Activated CD4-positive, alpha-beta T cell treated with anti-CD3 and anti-CD28 coated beads for 36 hours (primary cell): ENCODE measurements at regions of chr4 and their contacts with region 1.

Region 1: GRCh38 chr4:88523325-88524129 is at the start of gene PYURF:
- DNase-seq: peak; percentile 88
- ATAC-seq: peak; percentile 87
- H3K4me3 Mint-ChIP-seq: peak within 1 kb of the TSS; percentile 92
- H3K27ac Mint-ChIP-seq: peak within 1 kb of the TSS; percentile 88
- H3K4me1 Mint-ChIP-seq: peaks cover 45% of the 10 kb centered on the region
- H3K27me3 Mint-ChIP-seq: no peaks in the 10 kb centered on the region
- total RNA-seq, gene PYURF: 27.3 to 44.1 TPM

Region 2: GRCh38 chr4:88533937-88534750 is 10.6 kb after region 1 on chr4:
- CTCF ChIA-PET with region 1: interaction called, 11 read pairs
- POLR2A ChIA-PET with region 1: no interaction called
- intact Hi-C with region 1: no loop called
- DNase-seq: no peak
- ATAC-seq: no peak
- H3K4me3 Mint-ChIP-seq: no peak overlapping the region
- H3K27ac Mint-ChIP-seq: no peak overlapping the region
- H3K4me1 Mint-ChIP-seq: peaks cover 23% of the 10 kb centered on the region
- H3K27me3 Mint-ChIP-seq: no peaks in the 10 kb centered on the region

Region 3: DNA sequence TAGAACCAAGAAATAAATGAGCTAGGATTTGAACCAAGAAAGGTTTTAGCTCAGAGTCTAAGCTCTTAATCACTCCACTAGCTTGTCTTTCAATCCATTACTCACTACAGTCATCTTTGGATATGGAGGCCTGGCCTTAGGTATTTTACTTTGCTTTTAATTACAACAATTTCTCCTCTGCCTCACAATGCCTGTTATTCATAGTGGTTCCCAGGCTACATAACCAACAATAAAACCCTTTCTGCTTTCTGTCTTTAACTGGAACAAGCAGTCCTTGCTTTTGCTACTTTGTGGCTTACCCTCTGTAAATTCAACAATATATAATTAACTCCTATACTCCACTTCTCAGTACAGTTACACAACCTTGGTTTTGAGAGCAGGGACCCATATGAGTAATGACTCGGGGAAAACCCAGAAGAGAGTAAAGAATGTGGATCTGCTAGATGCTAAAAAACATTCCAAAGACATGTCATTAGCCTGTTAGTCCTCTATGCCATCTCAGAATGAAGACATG is 268.8 kb after region 1 on chr4:
- CTCF ChIA-PET with region 1: no interaction called
- POLR2A ChIA-PET with region 1: no interaction called
- intact Hi-C with region 1: loop called in 1 of 2 experiments (anchors 5 kb)
- DNase-seq: no peak
- ATAC-seq: peak; percentile 88
- H3K4me3 Mint-ChIP-seq: no peak overlapping the region
- H3K27ac Mint-ChIP-seq: no peak overlapping the region
- H3K4me1 Mint-ChIP-seq: peaks cover 18% of the 10 kb centered on the region
- H3K27me3 Mint-ChIP-seq: no peaks in the 10 kb centered on the region

Region 4: DNA sequence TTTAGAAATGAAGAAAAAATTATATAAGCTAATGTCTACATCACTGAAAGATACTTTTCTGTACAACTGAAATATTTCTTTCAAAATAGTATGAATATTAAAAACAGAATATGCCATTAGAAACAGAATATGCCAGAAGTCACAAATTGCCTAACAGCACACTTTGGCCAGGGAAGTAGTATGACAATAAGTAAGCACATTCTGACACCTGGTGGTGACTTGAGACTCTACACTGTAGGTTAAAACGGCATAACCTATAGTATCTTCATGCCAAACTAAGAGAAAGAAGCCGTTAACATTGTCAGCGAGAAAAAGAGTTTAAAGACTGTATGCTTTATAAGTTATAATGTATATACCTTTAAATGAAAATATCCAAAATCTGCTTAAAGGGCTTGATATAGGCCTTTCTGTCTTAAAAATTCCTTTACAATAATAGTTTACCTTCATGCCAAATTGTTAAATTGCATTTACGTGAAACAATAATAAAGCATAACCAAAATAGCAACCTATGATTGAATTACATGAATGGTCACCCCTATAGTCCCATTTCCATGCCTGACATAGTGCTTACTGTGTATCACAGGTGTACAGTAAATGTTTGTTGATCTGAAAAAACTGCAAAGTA is 500.6 kb after region 1 on chr4:
- CTCF ChIA-PET with region 1: interaction called, 13 read pairs
- POLR2A ChIA-PET with region 1: no interaction called
- intact Hi-C with region 1: loop called (anchors 1 to 2 kb)
- DNase-seq: peak; percentile 58
- ATAC-seq: peak; percentile 91
- H3K4me3 Mint-ChIP-seq: no peak overlapping the region
- H3K27ac Mint-ChIP-seq: no peak overlapping the region
- H3K4me1 Mint-ChIP-seq: peaks cover 4% of the 10 kb centered on the region
- H3K27me3 Mint-ChIP-seq: peaks cover 2% of the 10 kb centered on the region